ENCODE measurements at regions of chr12 and their contacts with region 1.

Region 1: DNA sequence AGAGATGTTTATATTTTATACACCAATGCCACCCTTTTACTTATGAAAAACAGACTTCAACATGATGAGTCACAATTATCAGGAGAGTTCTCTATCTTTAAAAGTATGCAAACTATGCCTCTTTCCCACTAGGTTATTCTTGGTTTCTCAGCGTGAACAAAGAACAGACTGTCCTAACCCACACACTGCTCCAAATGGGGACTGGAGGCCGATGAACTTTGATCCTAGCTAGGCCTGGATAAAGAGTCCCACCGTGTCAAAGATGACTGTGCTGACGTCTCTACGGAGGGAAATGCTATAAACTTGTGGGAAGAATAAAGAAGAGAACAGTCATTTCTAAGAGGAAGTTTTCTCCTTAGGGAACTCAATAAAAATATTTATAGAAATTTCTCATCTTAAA is 160.1 kb downstream of the EPS8 start:
- DNase-seq: peak; percentile 79 to 95
- H3K4me3 ChIP-seq: no peak overlapping the region
- H3K27ac ChIP-seq: peak overlapping the region; percentile 96
- H3K4me1 ChIP-seq: peaks cover 31% of the 10 kb centered on the region
- H3K27me3 ChIP-seq: no peaks in the 10 kb centered on the region
- CTCF ChIP-seq: no peak

Region 2: GRCh38 chr12:15682826-15683225 is 53.7 kb after region 1 on chr12:
- CTCF ChIA-PET with region 1: no interaction called
- POLR2A ChIA-PET with region 1: interaction called, 11 read pairs
- intact Hi-C with region 1: no loop called
- DNase-seq: peak in 1 of 2 experiments; percentile 63
- H3K4me3 ChIP-seq: no peak overlapping the region
- H3K27ac ChIP-seq: peak overlapping the region; percentile 31; the same call in 1 of the 2 replicates
- H3K4me1 ChIP-seq: peaks cover 22% of the 10 kb centered on the region
- H3K27me3 ChIP-seq: no peaks in the 10 kb centered on the region
- CTCF ChIP-seq: no peak

Region 3: DNA sequence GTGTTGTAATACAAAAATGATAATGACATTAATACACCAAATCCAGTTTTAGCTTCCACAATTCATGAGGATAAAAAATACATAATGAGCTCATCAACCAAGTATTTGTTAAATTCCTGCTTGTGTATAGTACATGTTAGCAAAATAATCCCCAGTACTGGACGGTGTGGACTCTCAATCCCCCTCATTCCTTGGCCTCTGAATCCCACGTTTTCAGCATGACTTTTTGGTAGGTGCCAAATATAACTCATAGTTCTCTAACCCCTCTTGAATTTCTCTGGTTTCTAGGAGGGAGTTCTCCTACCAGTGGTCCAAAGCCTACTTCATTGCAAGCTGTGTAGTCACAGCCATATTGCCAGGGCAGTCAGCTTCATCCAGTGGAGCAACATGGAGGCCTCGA is 201.4 kb after region 1 on chr12:
- CTCF ChIA-PET with region 1: no interaction called
- POLR2A ChIA-PET with region 1: interaction called, 11 read pairs
- intact Hi-C with region 1: no loop called
- DNase-seq: no peak
- H3K4me3 ChIP-seq: no peak overlapping the region
- H3K27ac ChIP-seq: no peak overlapping the region
- H3K4me1 ChIP-seq: peaks cover 25% of the 10 kb centered on the region
- H3K27me3 ChIP-seq: no peaks in the 10 kb centered on the region
- CTCF ChIP-seq: no peak

Measured in PC-9 (cell line).